Activated CD8-positive, alpha-beta T cell treated with anti-CD3 and anti-CD28 coated beads, Interleukin-2, amount 10 ng/mL, durations not matched to agents 7 days and 5 days (primary cell): ENCODE measurements at regions of chr6 and their contacts with region 1.

Region 1: DNA sequence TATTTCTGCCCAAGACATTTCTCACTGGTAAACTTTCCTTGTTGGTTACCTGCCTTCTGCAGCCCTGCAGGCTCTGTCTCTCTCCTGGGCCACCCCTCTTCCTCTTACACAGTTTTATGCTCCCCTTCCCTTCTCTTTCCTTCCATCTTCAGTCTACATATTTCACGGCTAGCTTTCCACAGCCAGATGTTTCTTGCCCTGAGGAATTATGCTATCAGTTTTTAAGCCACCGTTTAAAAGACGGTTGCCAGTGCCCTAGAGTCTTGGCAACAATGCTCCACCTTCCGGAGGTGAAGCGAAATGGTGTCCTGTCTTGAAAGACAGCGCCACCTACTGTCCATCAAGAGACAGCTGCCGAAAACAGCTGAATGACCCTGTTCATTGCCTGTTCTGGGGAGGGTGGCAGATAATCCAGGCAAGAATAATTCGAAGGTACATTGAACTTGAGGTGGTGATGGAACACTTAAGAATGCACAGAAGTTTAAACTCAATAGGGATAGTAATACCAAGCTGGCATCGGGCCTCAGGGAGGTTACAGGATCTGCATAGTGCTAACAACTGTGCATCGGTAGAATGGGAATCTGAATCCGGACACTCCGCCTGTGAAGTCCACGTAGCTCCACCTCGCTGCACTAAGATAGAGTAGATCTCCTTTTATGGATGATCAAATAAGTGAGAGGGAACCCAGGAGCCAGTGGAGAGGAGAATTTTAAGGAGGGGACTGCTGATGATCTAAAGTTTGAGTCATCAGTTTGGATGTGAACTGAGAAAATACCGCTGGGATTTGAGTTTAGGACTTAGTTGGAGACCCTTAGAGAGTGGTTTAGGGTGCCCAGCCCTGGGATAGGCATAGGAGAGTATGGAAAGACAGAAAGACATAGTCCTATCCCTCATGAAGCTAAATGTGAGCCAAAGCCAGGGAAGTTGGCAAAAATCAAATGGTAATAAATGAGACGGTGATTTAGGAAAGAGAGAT is 4.8 kb upstream of the TRIM40 start:
- DNase-seq: peak; percentile 81
- ATAC-seq: peak; percentile 94
- H3K4me3 Mint-ChIP-seq: no peak overlapping the region
- H3K27ac Mint-ChIP-seq: no peak overlapping the region
- H3K4me1 Mint-ChIP-seq: peaks cover 15% of the 10 kb centered on the region
- H3K27me3 Mint-ChIP-seq: peaks cover 66% of the 10 kb centered on the region

Region 2: DNA sequence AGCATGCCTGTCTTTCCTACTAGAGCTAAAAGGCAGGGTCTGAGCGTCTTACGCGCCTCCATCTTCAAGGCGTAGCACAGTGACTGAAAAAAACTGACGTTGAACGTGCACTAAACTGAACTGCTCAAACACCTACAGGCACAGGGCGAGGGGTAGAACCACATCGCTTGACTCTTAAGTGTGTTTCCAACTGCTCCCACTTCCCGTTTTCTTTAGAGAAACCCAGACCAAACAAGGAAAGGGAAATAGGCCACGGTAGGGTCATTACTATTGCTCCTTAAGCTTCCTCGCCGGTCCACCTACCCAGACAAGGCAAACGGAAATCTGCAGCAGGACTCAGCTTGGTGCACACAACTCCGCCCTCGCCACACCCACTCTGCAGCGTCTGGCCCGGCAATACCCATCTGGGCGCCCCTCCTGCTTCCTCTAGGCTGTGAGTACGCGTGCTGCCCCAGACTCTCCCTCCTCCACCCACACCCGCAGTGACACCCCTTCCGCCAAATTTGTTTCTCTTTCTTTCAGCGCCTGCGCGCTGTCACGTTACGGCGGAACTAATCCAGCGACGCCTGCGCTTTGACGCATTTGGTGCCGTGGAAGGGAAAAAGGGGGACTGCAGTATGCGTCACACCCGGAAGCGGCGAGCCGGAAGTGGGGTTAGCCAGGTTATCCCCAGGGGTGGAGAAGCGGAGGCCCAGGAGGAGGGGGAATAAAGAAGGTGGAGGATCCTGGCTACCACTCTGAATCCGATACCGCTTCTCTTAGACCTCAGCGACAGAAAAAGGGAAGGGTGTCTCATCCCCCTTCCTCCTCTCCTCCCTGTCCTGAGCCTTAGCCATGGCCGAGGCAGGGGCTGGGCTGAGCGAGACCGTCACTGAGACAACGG is 64.4 kb before region 1 on chr6 and contains the start of gene PPP1R11:
- CTCF ChIA-PET with region 1: interaction called, 17 read pairs
- POLR2A ChIA-PET with region 1: no interaction called
- DNase-seq: peak; percentile 100
- ATAC-seq: peak; percentile 98
- H3K4me3 Mint-ChIP-seq: peak within 1 kb of the TSS; percentile 87
- H3K27ac Mint-ChIP-seq: peak within 1 kb of the TSS; percentile 94
- H3K4me1 Mint-ChIP-seq: peaks cover 54% of the 10 kb centered on the region
- H3K27me3 Mint-ChIP-seq: peaks cover 10% of the 10 kb centered on the region
- total RNA-seq, gene PPP1R11: 48.1 to 50.3 TPM

Region 3: DNA sequence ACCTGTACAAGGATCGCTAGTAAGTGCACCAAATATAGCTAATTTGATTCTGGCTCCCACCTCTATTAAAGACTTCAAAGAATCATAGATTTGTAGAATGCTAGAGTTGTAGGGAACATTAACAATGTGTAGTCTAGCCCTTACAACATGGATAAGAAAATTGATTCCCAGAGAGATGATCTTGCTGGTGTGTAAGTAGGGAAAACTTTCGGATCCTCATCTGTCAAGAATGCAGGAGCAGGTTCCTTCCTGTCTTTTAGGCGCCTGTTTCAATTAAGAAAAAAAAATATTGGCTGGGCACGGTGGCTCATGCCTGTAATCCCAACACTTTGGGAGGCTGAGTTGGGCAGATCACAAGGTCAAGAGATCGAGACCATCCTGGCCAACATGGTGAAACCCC is 43.3 kb before region 1 on chr6:
- CTCF ChIA-PET with region 1: interaction called, 15 read pairs
- POLR2A ChIA-PET with region 1: no interaction called
- DNase-seq: no peak
- ATAC-seq: no peak
- H3K4me3 Mint-ChIP-seq: no peak overlapping the region
- H3K27ac Mint-ChIP-seq: no peak overlapping the region
- H3K4me1 Mint-ChIP-seq: no peaks in the 10 kb centered on the region
- H3K27me3 Mint-ChIP-seq: peaks cover 46% of the 10 kb centered on the region

Region 4: DNA sequence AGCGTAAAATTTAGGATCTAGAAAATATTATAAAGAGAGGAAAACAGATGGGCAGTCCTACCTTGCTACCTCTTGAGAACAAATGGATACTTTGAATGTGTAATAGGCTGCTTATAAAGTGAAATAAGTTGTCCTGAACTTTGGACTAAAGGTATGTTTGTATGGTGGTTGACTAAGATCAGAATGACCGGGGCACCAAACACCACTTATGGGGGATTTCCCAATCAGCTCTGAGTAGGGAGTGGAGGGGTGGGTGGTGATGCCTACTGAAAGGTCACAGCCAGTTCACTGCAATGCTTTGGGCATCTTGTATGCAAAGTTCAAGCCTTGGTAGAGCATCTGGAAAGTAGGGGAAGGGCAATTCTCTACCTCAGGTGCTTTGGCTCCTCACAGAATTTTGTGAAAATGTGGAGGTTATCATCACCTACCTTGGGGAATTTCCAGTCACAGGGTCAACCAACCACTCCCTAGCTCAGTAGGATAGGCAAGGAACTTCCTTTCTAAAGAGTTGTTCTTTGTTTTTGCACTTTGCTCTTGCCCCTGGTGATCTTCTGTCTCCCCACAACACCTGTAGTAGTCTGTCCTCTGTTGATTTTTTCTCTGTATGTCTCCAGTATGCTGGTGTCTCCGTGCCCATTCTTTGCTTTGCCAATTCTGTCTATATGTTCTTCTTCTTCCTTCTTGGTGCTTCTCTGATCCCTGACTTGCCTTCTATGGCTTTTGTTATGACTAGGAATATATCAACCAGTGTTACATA is 18.0 kb before region 1 on chr6 and contains the start of gene TRIM31:
- CTCF ChIA-PET with region 1: interaction called, 25 read pairs
- POLR2A ChIA-PET with region 1: interaction called, 3 read pairs
- DNase-seq: no peak
- ATAC-seq: no peak
- H3K4me3 Mint-ChIP-seq: no peak within 1 kb of the TSS
- H3K27ac Mint-ChIP-seq: no peak within 1 kb of the TSS
- H3K4me1 Mint-ChIP-seq: no peaks in the 10 kb centered on the region
- H3K27me3 Mint-ChIP-seq: peaks cover 51% of the 10 kb centered on the region
- total RNA-seq, gene TRIM31: not detected

Region 5: GRCh38 chr6:30169658-30170614 is 38.8 kb after region 1 on chr6:
- CTCF ChIA-PET with region 1: interaction called, 36 read pairs
- POLR2A ChIA-PET with region 1: interaction called, 3 read pairs
- DNase-seq: peak; percentile 38
- ATAC-seq: peak; percentile 82
- H3K4me3 Mint-ChIP-seq: no peak overlapping the region
- H3K27ac Mint-ChIP-seq: no peak overlapping the region
- H3K4me1 Mint-ChIP-seq: peaks cover 29% of the 10 kb centered on the region
- H3K27me3 Mint-ChIP-seq: peaks cover 51% of the 10 kb centered on the region

Region 6: DNA sequence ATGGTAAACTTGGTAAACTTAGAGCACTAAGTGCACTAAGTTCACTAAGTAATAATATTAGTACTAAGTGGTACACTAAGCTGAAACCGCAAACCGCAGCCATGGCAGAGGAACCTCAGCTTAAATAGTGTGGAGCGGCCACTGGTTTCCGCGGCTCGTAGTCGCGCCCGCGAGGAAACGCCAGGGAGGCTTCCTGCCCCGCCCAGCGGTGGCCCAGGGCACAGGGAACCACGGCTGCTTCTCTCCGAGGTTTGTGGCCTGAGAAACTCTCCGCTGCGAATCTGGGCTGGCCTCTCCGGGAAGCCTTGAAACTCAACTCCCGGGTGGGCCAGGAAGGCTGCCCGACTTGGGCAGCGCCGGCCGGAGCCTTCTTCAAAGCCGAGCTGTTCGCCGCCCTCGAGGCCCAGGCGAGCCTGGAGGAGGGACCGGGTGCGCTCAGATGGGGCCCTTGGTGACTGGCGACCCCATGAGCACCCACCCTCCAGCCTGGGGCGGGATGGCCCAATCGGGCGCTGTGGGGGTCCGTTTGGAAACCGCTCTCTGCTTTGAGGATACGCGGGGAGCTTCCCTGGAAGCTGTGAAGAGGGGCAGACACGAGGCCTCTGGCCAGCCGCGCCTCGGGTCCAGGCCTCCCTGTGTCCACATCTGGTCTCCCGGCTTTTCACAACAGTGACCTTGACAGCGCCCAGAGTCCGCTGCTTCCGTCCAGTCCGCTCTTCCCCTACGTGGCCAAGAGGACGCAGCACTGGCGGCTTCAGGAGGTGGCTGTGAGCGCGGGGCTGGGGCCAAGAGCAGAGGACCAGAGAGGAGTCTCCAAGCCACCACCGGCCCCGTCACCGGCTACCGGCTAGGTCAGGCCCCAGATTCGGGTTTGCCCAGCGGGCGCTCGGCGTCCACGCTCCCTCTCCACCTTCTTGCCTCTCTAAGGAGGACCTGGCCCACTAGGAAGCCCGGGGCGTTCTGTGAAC is 332.8 kb after region 1 on chr6:
- CTCF ChIA-PET with region 1: no interaction called
- POLR2A ChIA-PET with region 1: no interaction called
- DNase-seq: peak; percentile 78
- ATAC-seq: peak; percentile 64
- H3K4me3 Mint-ChIP-seq: no peak overlapping the region
- H3K27ac Mint-ChIP-seq: no peak overlapping the region
- H3K4me1 Mint-ChIP-seq: peaks cover 29% of the 10 kb centered on the region
- H3K27me3 Mint-ChIP-seq: peaks cover 80% of the 10 kb centered on the region

Region 7: DNA sequence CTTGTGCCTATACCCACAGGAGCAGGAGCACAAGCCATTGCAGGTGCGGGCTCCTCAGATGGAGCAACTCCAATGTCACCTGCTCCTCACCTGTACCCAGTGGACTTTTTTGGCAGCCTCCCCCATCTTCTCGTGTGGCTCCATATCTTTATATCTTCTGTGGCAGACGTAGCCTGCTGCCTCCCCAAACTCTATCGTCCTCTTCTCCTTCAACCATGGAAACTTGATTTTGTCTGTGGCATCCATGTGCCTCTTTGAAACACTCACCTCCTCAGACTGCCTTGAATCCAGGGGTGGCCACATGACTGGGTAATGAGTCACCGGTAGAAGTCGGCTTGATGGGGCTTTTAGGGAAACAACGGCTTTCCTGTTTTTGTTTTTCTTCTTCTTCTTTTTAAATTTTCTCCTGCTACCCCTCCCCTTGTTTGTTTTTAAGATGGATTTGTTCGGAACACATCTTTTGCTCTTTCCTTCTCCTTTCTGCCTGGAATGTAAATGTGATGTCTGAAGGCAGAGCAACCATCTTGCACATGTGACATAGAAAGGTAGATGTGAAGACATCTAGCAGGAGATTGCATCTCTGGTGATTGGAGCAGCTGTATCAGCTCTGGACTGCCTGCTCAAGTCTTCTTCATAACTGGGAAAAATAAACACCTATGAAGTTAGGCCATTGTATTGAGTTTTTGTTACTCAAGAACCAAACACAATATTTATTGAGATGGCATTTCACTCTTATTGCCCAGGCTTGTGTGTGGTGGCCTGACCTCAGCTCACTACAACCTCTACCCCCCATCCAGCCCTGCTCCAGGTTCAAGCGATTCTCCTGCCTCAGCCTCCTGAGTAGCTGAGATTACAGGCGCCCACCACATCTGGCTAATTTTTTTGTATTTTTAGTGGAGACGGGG is 683.2 kb after region 1 on chr6:
- CTCF ChIA-PET with region 1: no interaction called
- POLR2A ChIA-PET with region 1: no interaction called
- DNase-seq: peak; percentile 62
- ATAC-seq: peak; percentile 77
- H3K4me3 Mint-ChIP-seq: no peak overlapping the region
- H3K27ac Mint-ChIP-seq: peak overlapping the region; percentile 84
- H3K4me1 Mint-ChIP-seq: peaks cover 78% of the 10 kb centered on the region
- H3K27me3 Mint-ChIP-seq: no peaks in the 10 kb centered on the region